ENCODE measurements at regions of chr1 and their contacts with region 1.

Region 1: GRCh38 chr1:50332941-50333594 is 90.2 kb downstream of the DMRTA2 start:
- DNase-seq: peak; percentile 77
- H3K4me3 Mint-ChIP-seq: peak overlapping the region; percentile 62
- H3K27ac Mint-ChIP-seq: no peak overlapping the region
- H3K4me1 Mint-ChIP-seq: peaks cover 7% of the 10 kb centered on the region
- H3K27me3 Mint-ChIP-seq: peaks cover 50% of the 10 kb centered on the region
- CTCF ChIP-seq: peak; percentile 93

Region 2: DNA sequence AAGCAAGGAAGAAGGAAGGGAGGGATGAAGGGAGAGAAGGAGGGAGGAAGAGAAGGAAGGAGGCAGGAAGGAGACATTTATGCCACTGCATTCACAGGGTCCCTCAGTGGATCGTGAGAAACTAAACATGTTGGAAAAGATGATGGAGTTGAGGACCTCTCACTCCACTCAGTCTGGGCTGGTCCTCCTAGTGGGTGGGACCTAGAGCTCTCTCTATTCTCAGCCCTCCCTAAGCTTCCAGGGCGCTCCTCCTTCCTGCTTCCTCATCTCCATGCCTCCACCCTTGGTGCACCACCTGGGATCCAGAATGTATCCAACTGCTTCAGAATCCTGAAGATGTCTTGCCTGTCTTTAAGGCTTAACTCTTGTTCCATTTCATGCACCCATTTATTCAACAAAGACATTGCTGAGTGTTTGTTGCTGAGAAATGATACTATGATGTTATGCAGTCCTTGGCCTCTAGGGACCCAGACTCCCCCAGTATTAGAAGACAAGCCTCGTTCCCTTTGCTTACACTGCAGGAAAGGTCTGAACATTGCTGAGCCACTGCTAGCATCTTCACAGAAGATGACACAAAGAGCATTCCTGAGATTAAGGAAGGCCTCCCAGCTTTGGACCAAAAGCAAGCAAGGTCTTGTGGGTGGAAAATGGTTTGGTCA is 1644.8 kb before region 1 on chr1:
- CTCF ChIA-PET with region 1: no interaction called
- intact Hi-C with region 1: loop called (anchors 10 kb)
- DNase-seq: peak; percentile 15
- H3K4me3 Mint-ChIP-seq: no peak overlapping the region
- H3K27ac Mint-ChIP-seq: no peak overlapping the region
- H3K4me1 Mint-ChIP-seq: peaks cover 4% of the 10 kb centered on the region
- H3K27me3 Mint-ChIP-seq: no peaks in the 10 kb centered on the region
- CTCF ChIP-seq: peak; percentile 42

Region 3: DNA sequence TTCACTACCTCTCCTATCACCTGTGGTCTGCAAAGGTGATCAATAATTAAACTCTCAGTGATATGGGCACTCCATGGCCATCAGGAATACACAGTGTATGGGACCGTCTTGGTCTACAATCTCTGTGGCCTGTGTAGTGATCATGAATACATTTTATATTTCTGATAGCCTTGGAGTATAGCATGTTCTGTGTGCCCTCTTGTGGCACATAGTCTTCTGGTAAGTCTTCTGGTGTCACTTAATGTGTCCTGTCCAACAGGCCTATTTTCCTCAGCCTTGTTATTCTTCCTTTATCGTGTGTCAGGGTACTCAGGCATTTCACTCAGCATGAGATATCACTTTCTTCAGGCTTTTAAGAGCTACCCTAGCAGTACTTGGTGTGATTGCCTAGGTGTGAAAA is 702.9 kb before region 1 on chr1:
- CTCF ChIA-PET with region 1: no interaction called
- intact Hi-C with region 1: loop called (anchors 10 kb)
- DNase-seq: peak; percentile 14
- H3K4me3 Mint-ChIP-seq: no peak overlapping the region
- H3K27ac Mint-ChIP-seq: no peak overlapping the region
- H3K4me1 Mint-ChIP-seq: peaks cover 13% of the 10 kb centered on the region
- H3K27me3 Mint-ChIP-seq: no peaks in the 10 kb centered on the region
- CTCF ChIP-seq: no peak

Region 4: DNA sequence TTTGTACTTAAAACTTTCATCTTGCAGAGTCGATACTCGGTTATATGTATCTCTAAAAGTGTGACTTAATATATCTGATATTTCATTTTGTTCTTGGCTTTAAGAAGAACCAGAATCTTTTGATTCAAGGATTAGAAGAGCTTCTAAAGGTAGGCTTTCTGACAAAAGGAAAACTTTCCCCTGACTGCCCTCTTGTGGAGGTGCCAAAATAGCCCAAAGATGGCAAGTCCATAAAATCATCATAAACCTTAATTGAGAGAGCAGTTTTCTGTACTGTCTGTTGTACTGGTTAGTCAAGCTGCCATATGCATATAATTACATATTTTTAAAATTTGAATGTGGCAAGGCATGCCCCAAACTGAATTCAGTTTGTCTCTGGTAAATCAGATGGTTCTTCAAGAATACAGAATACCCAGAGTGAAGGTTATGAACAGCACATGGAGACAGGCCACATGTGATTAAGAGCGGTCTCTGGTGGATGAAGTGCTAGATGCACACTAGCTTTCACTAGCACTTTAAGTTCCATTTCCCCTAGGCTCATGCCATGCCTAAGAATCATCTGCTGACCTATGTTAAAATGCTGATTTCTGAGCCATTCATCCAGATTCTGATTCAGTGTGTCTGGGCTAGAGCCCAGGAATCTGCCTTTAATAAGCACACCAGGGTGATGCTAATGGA is 252.0 kb before region 1 on chr1:
- CTCF ChIA-PET with region 1: no interaction called
- intact Hi-C with region 1: loop called (anchors 2 kb)
- DNase-seq: peak; percentile 49
- H3K4me3 Mint-ChIP-seq: no peak overlapping the region
- H3K27ac Mint-ChIP-seq: no peak overlapping the region
- H3K4me1 Mint-ChIP-seq: no peaks in the 10 kb centered on the region
- H3K27me3 Mint-ChIP-seq: no peaks in the 10 kb centered on the region
- CTCF ChIP-seq: peak; percentile 34

Region 5: DNA sequence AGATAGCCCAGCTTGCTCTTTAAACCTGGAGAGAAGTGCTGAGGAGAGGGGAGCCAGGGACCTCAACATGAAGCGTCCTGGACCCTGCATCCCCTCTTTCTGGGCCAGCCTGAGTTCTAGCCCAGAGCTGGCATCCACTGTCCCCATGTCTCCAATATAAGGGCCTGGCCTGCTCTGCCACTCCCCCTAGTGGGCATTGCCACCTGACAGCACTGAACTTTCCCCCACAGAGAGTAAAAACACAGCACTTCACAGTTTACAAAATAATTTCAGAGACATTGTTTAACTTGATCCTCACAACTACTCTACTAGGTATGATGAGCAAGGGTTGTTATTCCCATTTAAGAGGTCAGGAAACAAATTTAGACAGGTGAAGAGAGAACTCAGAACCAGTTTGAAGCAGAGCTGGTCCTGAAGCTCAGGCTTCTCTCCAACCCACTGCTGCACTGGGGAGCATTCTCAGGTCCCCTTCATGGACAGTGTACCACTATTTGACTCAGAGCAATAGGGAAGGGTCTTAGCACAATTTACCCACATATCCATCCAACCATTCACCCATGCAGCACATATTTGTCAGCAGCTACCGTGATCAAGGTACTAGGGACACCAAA is 61.0 kb before region 1 on chr1:
- CTCF ChIA-PET with region 1: interaction called, 3 read pairs
- intact Hi-C with region 1: loop called (anchors 5 kb)
- DNase-seq: peak; percentile 65
- H3K4me3 Mint-ChIP-seq: no peak overlapping the region
- H3K27ac Mint-ChIP-seq: no peak overlapping the region
- H3K4me1 Mint-ChIP-seq: peaks cover 3% of the 10 kb centered on the region
- H3K27me3 Mint-ChIP-seq: peaks cover 71% of the 10 kb centered on the region
- CTCF ChIP-seq: peak; percentile 65